Aorta (tissue), 5 donors: ENCODE measurements at regions of chr11 and their contacts with region 1.

Region 1: DNA sequence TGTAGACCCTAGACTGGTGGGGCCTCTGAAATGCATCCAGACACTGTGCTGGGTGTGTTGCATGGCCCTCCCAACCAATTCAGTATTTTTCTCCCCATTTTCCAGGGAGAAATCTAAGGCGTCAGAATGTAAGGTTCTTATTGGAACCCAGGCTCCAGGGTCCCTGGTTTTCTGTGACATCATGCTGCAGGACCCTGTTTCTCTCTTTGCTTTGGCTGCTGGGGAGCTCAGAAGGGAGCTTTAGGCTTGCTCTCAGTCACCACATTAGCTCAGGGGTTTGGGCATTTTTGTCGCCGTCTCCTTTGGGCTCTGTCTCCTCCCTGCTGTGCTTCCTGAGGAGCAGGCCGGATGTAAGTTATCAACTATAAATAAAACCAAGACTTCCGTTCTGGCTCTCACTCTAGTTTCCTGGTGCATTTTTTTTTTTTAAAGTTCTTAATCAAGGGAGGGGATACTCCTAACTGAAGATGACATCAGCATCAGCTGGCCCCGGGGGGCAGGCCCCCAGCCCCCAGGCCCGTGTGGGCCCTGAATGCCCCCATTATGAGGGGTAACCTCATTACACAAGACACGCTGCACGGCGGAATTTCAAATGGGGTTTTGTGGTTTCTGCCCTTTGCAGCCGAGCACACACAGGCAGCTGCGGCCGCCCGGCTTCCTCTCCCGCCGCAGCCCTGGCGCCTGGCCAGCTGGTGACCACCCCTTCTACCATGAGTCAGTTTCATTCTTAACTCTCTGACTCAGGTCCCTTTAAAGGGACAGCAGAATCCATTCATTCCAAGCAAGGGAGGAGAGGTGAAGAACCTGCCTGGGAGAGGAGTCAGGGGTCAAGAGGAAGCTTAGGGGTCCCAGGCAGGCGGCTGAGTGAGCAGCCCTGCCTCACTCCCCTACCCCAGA is 3.2 kb downstream of the MYEOV start:
- DNase-seq: peak; percentile 98 to 99
- ATAC-seq: peak; percentile 87
- H3K4me3 ChIP-seq: no peak overlapping the region
- H3K27ac ChIP-seq: peak overlapping the region; percentile 34 to 84
- H3K4me1 ChIP-seq: no peaks in the 10 kb centered on the region
- H3K27me3 ChIP-seq: no peaks in the 10 kb centered on the region

Region 2: GRCh38 chr11:69122642-69123431 is 174.3 kb before region 1 on chr11:
- intact Hi-C with region 1: loop called (anchors 2 to 5 kb)
- DNase-seq: peak; percentile 78 to 91
- ATAC-seq: peak; percentile 76
- H3K4me3 ChIP-seq: no peak overlapping the region
- H3K27ac ChIP-seq: peak overlapping the region in 1 of 2 donors; percentile 11
- H3K4me1 ChIP-seq: peaks cover 0 to 2% of the 10 kb centered on the region in 2 donors
- H3K27me3 ChIP-seq: no peaks in the 10 kb centered on the region

Region 3: DNA sequence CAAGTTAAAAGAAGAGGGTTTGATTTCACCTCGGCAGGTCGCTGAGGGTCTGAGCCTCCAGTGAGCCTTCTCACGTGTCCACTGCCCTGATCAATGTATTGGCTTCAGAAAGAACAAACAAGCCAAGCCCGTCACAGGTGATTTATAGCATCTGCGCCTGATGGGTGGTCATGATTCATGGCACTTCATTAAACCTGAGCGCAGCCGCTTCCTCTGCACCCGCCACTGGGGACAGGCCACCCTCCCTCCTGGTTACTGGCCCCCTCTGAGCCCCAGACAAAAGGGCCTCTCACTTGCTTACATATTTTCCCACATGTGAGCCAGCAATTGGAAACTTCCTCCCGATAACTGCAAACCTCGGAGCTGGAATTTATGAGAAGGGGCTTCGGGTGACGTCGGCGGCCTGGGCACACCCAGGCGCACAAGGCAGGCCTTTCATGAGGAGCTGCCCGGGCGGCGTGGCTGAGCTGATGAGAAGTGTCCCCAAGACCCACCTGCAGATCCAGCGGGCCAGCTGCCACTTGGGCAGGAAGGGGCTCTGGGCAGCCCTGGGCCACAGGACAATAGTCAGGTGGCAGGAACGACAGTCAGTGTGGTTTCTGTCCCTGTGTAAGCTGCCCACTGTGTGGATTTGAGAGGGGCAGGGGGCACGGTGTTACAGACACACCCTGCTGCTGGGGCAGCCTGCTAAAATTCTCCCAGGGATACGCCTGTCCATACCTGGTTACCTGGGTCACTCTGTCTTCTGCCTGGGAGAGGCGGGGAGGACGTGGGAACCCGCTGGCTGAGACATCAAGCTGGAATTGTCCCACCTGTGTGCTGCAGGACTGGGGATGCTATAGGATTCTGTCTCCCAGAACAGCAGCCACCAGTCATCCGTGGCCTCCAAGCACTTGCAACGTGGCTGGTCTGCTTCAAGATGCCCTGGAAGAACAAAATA is 120.3 kb after region 1 on chr11:
- intact Hi-C with region 1: loop called in 1 of 2 experiments (anchors 2 kb)
- DNase-seq: peak in 1 of 2 donors; percentile 73
- ATAC-seq: no peak
- H3K4me3 ChIP-seq: no peak overlapping the region
- H3K27ac ChIP-seq: peak overlapping the region in 1 of 2 donors; percentile 53
- H3K4me1 ChIP-seq: no peaks in the 10 kb centered on the region
- H3K27me3 ChIP-seq: no peaks in the 10 kb centered on the region

Region 4: DNA sequence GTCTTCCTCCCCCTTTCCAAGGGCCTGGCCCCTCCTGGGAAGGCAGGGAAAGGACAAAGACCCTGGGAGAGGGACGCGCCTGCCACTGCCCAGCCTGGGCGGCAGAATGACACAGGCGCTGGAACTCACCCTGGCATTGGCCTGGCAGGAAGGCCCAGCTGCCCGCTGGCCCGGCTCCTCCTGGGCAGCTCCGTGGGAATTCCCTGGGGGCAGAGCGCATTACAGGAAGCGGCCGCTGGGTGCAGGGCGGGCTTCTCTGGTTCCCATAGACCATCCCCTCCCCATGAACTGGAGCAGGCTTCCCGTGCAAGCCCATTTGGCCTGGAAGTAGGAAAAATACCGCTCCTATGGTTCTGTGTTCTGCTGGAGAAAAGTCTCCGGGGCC is 243.0 kb after region 1 on chr11:
- intact Hi-C with region 1: loop called in 1 of 2 experiments (anchors 5 kb)
- DNase-seq: peak; percentile 92 to 93
- ATAC-seq: peak; percentile 83
- H3K4me3 ChIP-seq: no peak overlapping the region
- H3K27ac ChIP-seq: peak overlapping the region; percentile 1 to 84
- H3K4me1 ChIP-seq: no peaks in the 10 kb centered on the region
- H3K27me3 ChIP-seq: no peaks in the 10 kb centered on the region

Region 5: DNA sequence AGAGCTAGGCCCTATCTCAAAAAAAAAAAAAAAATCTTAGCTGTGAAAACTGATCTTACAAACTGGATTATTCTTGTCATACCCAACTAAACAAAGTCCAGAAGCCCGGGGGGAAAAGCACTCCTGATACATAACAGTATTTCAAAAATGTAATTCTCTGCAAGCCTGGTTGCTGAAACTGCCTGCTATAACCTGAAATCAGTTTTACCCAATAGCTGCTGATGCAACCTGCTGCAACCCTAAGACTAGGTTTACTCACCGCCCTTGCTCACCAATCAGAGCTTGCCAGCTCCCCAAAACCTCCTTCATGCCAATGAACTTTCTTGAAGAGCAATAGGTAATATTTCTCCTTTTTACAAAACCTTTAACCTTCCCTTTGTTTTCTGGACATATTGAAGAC is 394.3 kb after region 1 on chr11:
- intact Hi-C with region 1: no loop called
- DNase-seq: no peak
- ATAC-seq: no peak
- H3K4me3 ChIP-seq: no peak overlapping the region
- H3K27ac ChIP-seq: no peak overlapping the region
- H3K4me1 ChIP-seq: no peaks in the 10 kb centered on the region
- H3K27me3 ChIP-seq: no peaks in the 10 kb centered on the region